Ascending aorta (tissue), 2 donors: ENCODE measurements at regions of chr17 and their contacts with region 1.

Region 1: GRCh38 chr17:73156166-73156840 is 8.5 kb upstream of the SSTR2 start:
- DNase-seq: peak in 1 of 2 donors; percentile 72
- H3K4me3 ChIP-seq: no peak overlapping the region
- H3K27ac ChIP-seq: no peak overlapping the region
- H3K4me1 ChIP-seq: no peaks in the 10 kb centered on the region
- H3K27me3 ChIP-seq: no peaks in the 10 kb centered on the region
- CTCF ChIP-seq: peak; percentile 57 to 86 (median 65)

Region 2: GRCh38 chr17:72556944-72557826 is 599.1 kb before region 1 on chr17:
- intact Hi-C with region 1: loop called (anchors 5 kb)
- DNase-seq: no peak
- H3K4me3 ChIP-seq: no peak overlapping the region
- H3K27ac ChIP-seq: no peak overlapping the region
- H3K4me1 ChIP-seq: no peaks in the 10 kb centered on the region
- H3K27me3 ChIP-seq: no peaks in the 10 kb centered on the region
- CTCF ChIP-seq: peak; percentile 40 to 79 (median 62)

Region 3: DNA sequence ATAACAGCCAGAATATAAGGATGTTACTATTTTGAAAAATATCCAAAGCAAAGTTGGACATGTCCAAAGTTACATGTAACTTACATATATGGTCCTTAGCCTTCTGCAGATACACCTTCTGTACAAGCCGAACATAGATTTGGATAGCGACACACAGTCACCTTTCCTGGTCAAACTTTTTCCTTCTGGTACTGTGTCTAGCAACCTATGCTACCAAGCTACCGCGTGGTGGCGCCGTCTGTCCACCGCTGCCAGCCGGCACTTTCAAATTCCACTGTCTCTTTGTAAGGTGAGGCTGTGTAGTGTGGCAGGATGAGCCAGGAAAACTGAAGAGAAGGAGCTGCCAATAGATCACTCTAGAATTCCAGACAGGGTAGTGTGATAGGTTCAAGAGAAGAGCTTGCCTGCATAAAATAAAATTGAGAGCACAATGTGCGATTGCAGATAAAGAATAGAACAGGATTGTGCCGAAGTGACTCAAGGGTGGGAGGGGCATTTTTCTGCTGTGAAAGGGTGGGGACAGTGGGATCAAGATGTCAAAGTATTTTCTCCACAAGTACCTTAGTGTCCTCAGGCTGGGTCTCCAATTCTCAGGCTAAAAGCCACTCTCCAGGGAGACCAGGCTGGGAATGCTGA is 430.8 kb before region 1 on chr17:
- intact Hi-C with region 1: loop called (anchors 2 kb)
- DNase-seq: no peak
- H3K4me3 ChIP-seq: no peak overlapping the region
- H3K27ac ChIP-seq: no peak overlapping the region
- H3K4me1 ChIP-seq: no peaks in the 10 kb centered on the region
- H3K27me3 ChIP-seq: no peaks in the 10 kb centered on the region
- CTCF ChIP-seq: peak in 2 of 3 experiments; percentile 53 to 63

Region 4: DNA sequence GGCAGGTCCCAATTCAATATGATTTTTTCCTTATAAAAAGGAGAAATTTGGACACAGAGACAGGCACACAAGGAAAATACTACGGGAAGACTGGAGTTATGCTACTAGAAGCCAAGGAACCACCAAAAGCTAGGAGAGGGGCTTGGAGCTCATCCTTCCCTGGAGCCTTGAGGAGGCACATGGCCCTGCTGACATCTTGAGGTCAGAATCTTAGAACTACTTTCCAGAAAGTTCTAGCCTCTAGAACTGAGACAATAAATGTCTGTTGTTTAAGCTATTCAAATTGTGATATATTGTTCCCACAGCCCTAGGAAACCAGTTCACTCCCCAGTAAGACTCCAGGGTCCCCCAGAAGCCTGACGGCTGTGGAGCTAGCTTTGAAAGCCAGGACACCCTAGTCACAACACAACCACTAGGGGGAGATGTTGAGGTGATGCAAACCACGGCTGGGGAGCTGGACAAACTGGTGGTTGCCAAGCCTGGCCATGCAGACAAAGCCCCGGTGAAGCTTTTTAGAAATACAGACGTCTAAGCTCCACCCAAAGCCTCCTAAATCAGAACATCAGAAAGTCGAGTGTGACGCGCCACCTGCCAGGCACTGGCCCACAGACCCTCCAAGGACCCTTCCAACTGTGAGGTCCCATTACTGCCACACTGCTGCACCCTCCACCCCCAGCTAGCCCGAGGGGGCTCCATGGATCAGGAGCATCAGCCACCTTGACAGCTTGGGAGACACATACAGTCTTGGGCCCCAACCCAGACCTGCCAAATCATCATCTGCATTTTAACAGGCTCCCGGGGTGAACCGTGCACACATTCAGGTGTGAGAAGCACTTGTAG is 170.2 kb before region 1 on chr17:
- intact Hi-C with region 1: loop called (anchors 2 kb)
- DNase-seq: peak in 1 of 2 donors; percentile 72
- H3K4me3 ChIP-seq: no peak overlapping the region
- H3K27ac ChIP-seq: no peak overlapping the region
- H3K4me1 ChIP-seq: no peaks in the 10 kb centered on the region
- H3K27me3 ChIP-seq: no peaks in the 10 kb centered on the region
- CTCF ChIP-seq: peak; percentile 50 to 75 (median 50)